Activated naive CD4-positive, alpha-beta T cell treated with anti-CD3 and anti-CD28 coated beads for 36 hours (primary cell): ENCODE measurements at regions of chr1 and their contacts with region 1.

Region 1: GRCh38 chr1:89762779-89763648 is 57.8 kb upstream of the LRRC8D start:
- DNase-seq: peak; percentile 92
- H3K4me3 Mint-ChIP-seq: peak overlapping the region; percentile 86
- H3K27ac Mint-ChIP-seq: peak overlapping the region; percentile 81
- H3K4me1 Mint-ChIP-seq: peaks cover 42% of the 10 kb centered on the region
- H3K27me3 Mint-ChIP-seq: no peaks in the 10 kb centered on the region

Region 2: GRCh38 chr1:89605692-89606091 is 157.3 kb before region 1 on chr1:
- CTCF ChIA-PET with region 1: interaction called, 36 read pairs
- intact Hi-C with region 1: loop called (anchors 1 kb)
- DNase-seq: no peak
- H3K4me3 Mint-ChIP-seq: no peak overlapping the region
- H3K27ac Mint-ChIP-seq: no peak overlapping the region
- H3K4me1 Mint-ChIP-seq: peaks cover 95% of the 10 kb centered on the region
- H3K27me3 Mint-ChIP-seq: no peaks in the 10 kb centered on the region

Region 3: DNA sequence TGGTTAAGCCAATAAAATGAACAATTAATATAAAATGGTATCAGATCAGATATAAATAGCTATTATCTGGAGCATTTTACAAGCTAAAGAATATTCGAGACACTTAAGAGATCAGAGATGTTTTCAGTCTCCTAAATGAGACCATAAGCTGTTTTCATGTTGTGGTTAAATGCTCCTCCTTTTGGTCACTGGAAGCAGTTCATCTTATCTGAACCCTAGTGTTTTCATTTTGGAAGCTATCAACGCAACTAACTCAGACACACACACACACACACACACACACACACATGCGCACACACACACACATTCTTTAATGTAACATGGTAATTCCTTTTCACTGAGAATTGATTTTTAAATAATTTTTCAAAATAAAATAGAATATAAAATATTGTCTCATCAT is 140.1 kb before region 1 on chr1:
- CTCF ChIA-PET with region 1: interaction called, 14 read pairs
- intact Hi-C with region 1: no loop called
- DNase-seq: no peak
- H3K4me3 Mint-ChIP-seq: no peak overlapping the region
- H3K27ac Mint-ChIP-seq: no peak overlapping the region
- H3K4me1 Mint-ChIP-seq: peaks cover 50% of the 10 kb centered on the region
- H3K27me3 Mint-ChIP-seq: no peaks in the 10 kb centered on the region

Region 4: DNA sequence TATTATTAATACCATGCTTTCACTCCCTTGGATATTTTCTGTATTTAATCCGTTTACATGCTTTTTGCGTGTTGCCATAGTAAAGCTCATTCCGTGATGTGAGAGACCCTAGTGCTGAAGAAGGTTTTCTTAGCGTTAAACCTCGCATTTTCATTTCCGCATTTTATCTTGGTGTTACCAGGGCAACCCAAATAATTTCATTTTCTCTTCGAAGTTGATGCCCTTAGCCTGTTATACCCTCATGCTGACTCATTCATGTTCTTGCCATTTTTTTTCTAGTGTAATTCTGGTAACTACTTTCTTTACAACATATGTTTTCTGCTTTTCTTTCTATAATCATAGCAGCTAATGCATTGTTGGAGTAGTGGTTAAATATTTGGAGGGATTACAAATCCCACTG is 92.9 kb before region 1 on chr1:
- CTCF ChIA-PET with region 1: interaction called, 16 read pairs
- intact Hi-C with region 1: no loop called
- DNase-seq: no peak
- H3K4me3 Mint-ChIP-seq: peak overlapping the region; percentile 16
- H3K27ac Mint-ChIP-seq: peak overlapping the region; percentile 43
- H3K4me1 Mint-ChIP-seq: peaks cover 83% of the 10 kb centered on the region
- H3K27me3 Mint-ChIP-seq: no peaks in the 10 kb centered on the region

Region 5: DNA sequence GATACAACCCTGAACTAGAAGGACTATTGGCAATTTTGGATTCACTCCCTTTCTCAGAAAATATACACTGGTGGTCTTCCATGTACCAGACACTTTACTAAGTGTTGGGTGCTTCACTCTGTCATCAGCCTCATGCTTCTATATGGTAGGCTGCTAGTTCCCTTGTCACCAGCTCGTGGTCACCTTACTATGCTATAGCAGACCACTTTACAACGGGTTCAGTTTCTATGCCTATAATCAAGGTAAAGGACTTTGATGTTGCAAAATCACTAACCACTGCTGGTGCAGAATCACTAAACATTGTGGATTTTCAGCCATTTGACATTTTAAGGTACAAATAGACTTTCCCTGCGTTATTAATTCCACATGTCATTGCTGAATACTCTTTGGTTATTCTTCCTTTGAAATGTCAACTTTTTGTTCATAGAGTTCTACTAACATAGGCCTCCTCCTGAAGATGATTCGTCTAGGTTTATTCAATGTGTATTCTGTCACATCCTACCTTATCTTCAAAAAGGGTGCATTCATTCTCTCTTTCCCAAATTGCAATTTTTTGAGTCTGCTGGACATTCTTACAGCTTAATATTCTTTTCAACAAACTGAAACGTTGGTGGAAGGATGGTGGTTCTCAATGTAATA is 51.8 kb before region 1 on chr1:
- CTCF ChIA-PET with region 1: interaction called, 11 read pairs
- intact Hi-C with region 1: no loop called
- DNase-seq: no peak
- H3K4me3 Mint-ChIP-seq: no peak overlapping the region
- H3K27ac Mint-ChIP-seq: no peak overlapping the region
- H3K4me1 Mint-ChIP-seq: peaks cover 19% of the 10 kb centered on the region
- H3K27me3 Mint-ChIP-seq: no peaks in the 10 kb centered on the region

Region 6: DNA sequence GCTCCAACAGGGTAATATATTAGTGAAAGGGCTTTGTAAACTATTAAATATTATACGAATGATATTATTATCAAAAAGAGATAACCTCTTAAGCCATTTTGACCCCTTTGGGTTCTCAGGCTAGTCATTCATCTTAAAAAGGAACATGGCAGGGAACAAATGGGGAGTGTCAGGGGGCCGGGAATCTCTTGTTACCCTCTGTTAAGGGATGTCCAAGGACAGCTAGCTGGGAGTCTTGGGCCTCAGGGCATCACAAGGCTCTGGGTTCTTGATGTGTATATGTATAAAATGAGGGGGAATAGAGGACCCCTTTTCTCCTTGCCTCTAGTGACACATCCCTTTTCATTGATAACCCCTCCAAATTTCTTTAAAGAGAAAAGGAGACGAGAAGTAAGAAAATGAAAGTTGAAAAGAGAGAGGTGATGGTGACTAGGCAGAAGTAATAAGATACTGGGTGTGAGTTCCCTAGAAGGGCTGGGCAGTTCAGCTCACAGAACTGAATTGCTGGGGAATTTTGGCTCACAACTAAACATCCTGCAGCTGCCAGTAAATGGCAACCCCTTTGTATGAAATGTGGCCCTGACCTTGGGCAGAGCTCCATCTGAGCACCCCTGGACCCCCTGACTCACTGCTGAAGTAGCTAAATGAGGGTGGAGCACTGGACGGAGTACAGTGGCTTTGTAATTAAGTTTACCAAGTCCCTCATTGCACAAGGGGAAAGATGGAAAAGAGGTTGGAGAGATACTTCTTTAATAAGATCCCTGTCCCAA is 211.9 kb after region 1 on chr1:
- CTCF ChIA-PET with region 1: no interaction called
- intact Hi-C with region 1: no loop called
- DNase-seq: no peak
- H3K4me3 Mint-ChIP-seq: no peak overlapping the region
- H3K27ac Mint-ChIP-seq: no peak overlapping the region
- H3K4me1 Mint-ChIP-seq: no peaks in the 10 kb centered on the region
- H3K27me3 Mint-ChIP-seq: no peaks in the 10 kb centered on the region